Left colon (tissue), 2 donors: ENCODE measurements at regions of chr19 and their contacts with region 1.

Region 1: DNA sequence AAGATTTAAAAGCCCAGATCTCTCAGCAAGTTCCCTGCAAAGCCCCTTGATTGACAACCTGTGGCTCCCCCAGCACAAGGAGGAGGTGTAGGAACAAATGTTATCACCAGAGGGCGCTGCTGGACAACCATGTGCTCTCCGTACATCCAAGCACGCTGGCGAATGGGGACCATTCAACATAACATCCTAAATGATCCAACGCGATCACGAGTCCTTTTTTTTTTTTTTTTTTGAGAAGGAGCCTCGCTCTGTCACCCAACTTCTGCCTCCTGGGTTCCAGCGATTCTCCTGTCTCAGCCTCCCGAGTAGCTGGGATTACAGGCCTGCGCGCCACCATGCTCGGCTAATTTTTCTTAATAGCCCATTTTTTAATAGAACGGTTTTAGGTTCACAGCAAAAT is 52.0 kb downstream of the NWD1 start:
- DNase-seq: peak; percentile 62 to 85
- ATAC-seq: peak; percentile 76

Region 2: DNA sequence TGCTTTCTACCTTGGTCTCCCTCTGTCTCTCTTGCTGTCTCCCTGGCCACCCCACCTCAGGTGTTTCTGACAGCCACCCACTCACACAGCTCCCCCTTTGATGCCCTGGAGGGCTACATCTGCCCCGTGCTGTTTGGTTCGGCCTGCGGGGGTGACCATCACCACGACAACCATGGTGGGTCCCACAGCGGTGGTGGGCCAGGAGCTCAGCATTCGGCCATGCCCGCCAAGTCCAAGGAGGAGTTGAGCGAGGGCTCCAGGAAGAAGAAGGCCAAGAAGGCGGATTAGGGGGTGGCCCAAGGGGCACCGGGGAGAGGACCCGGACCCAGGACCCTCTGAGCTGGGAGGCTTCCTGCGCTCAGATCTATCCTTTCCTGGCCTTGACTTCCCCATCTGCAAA is 83.5 kb before region 1 on chr19:
- intact Hi-C with region 1: no loop called
- DNase-seq: no peak
- ATAC-seq: no peak

Region 3: DNA sequence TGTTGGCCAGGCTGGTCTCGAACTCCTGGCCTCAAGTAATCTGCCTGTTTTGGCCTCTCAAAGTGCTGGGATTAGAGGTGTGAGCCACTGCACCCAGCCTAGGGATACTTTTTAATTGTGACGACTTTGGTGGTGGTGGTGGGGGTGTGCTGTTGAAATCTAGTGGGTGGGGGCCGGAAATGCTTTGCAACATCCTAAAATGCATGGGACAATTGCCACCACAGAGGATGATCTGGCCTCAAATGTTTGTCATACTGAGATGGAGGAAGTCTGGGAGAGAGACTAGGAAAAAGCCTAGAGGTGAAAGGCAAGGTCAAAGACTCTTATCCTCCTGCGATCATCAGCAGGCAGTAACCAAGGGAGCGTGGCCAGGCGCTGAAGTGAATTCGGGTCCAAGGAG is 50.6 kb before region 1 on chr19:
- intact Hi-C with region 1: no loop called
- DNase-seq: no peak
- ATAC-seq: no peak

Region 4: DNA sequence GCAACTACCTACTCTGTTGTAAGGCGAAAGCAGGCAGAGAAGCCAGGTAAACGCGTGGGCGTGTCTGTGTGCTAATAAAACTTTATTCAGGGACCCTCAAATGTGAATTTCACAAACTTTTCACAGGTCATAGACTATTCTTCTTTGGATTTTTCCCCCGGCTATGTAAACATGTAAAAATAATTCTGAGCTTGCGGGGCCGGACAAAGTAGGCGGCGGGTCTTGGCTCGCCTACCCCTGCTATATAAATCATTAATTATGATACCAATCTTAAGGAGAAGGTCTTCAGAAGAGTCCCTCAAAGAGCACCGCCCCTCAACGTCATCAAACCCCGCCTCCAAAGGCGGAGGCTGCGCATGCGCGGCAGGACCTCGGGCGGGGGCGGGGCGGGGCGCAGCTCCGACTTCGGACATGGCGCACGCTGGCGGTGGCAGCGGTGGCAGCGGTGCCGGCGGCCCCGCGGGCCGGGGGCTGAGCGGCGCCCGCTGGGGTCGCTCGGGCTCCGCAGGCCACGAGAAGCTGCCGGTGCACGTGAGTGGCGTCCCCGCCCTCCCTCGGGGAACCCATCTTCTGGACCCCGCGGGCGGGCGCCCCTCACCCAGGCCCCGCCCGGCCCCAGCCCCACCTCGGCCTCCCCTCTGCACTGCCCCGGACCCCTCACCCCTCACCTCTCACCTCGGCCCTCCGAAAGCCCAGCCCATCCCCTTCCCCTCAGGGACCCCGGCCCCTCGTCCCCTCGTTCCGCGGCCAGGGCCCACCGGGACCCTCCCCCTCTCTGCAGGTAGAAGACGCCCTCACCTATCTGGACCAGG is 57.6 kb after region 1 on chr19 and contains the start of gene SIN3B:
- intact Hi-C with region 1: loop called in 1 of 2 experiments (anchors 10 kb)
- DNase-seq: peak; percentile 75 to 87
- ATAC-seq: peak; percentile 98
- total RNA-seq, gene SIN3B: 34.1 to 35.7 TPM

Region 5: DNA sequence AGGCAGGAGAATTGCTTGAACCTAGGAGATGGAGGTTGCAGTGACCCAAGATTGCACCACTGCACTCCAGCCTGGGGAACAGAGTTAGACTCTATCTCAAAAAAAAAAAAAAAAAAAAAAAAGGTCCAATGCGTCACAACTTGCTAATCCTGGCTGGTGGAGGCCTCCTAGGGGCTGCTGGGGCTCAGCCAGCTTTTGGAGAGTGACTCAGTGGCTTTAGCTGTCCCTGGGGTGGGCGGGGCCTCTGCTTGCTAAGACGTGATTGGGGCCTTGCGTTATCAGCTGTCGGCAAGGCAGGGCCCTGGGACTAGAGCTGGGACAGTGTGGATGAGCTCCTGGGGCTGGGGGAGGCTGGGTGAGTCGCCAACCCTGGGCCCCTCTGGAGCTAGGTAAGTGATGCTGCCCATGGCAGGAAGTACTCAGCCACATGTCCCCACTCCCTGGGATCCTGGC is 149.2 kb after region 1 on chr19:
- intact Hi-C with region 1: no loop called
- DNase-seq: no peak
- ATAC-seq: no peak

Region 6: GRCh38 chr19:16951529-16951928 is 179.9 kb after region 1 on chr19:
- intact Hi-C with region 1: no loop called
- DNase-seq: no peak
- ATAC-seq: no peak

Region 7: GRCh38 chr19:17052439-17053210 is 281.0 kb after region 1 on chr19:
- intact Hi-C with region 1: loop called in 1 of 2 experiments (anchors 5 kb)
- DNase-seq: peak in 1 of 2 donors; percentile 53
- ATAC-seq: peak; percentile 73